Common myeloid progenitor, CD34-positive (primary cell): ENCODE measurements at regions of chr14 and their contacts with region 1.

Region 1: GRCh38 chr14:20970983-20971704 is 15.9 kb downstream of the RNASE2 start:
- DNase-seq: peak; percentile 81 to 88 (median 88)
- H3K4me3 ChIP-seq: peak overlapping the region; percentile 47 to 92 (median 79)
- H3K27ac ChIP-seq: no peak overlapping the region
- H3K4me1 ChIP-seq: peaks cover 0 to 14% (median 11%) of the 10 kb centered on the region in 4 experiments
- H3K27me3 ChIP-seq: peaks cover 0 to 2% (median 0%) of the 10 kb centered on the region in 5 experiments

Region 2: GRCh38 chr14:20356422-20356821 is 614.7 kb before region 1 on chr14:
- CTCF ChIA-PET with region 1: no interaction called
- POLR2A ChIA-PET with region 1: no interaction called
- DNase-seq: no peak
- H3K4me3 ChIP-seq: no peak overlapping the region
- H3K27ac ChIP-seq: peak overlapping the region in 1 of 2 experiments; percentile 2
- H3K4me1 ChIP-seq: peaks cover 0 to 9% (median 3%) of the 10 kb centered on the region in 4 experiments
- H3K27me3 ChIP-seq: no peaks in the 10 kb centered on the region

Region 3: DNA sequence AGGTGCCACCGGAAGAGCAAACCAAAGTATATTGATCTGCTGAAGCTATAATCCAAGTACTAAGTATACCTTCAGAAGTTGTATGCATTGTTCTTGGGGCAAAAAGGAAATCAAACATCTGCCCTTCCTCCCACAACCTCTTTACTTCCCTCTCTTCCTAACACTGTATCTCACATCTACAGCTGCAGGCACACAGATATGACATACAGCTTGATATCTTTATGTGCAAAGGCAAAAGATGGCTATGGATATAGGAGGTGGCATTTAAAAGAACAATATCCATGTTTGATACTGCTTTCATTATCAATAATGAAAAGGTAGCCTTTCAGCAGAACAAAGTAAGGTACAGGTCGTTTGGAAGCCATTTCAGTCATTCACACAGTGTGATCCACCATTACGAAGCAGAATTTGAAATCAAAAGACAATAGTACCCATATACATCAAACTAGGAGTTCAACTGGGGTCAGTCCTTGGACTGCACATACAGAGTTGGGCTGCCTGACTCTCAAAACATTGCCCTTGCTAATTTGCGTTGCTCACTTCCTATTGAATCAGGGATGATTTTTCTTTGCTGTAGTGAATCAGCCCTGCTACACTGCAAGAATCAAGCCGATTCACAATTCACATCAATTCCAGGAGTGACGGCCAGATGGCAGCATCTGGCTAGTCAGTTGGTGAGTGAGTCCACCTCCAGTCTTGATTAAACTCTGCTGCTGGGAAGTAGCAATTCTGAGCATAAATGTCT is 273.7 kb before region 1 on chr14:
- CTCF ChIA-PET with region 1: interaction called, 11 read pairs
- POLR2A ChIA-PET with region 1: no interaction called
- DNase-seq: peak; percentile 75 to 87 (median 81)
- H3K4me3 ChIP-seq: peak overlapping the region in 1 of 7 experiments; percentile 27
- H3K27ac ChIP-seq: no peak overlapping the region
- H3K4me1 ChIP-seq: peaks cover 0 to 7% (median 5%) of the 10 kb centered on the region in 4 experiments
- H3K27me3 ChIP-seq: no peaks in the 10 kb centered on the region

Region 4: DNA sequence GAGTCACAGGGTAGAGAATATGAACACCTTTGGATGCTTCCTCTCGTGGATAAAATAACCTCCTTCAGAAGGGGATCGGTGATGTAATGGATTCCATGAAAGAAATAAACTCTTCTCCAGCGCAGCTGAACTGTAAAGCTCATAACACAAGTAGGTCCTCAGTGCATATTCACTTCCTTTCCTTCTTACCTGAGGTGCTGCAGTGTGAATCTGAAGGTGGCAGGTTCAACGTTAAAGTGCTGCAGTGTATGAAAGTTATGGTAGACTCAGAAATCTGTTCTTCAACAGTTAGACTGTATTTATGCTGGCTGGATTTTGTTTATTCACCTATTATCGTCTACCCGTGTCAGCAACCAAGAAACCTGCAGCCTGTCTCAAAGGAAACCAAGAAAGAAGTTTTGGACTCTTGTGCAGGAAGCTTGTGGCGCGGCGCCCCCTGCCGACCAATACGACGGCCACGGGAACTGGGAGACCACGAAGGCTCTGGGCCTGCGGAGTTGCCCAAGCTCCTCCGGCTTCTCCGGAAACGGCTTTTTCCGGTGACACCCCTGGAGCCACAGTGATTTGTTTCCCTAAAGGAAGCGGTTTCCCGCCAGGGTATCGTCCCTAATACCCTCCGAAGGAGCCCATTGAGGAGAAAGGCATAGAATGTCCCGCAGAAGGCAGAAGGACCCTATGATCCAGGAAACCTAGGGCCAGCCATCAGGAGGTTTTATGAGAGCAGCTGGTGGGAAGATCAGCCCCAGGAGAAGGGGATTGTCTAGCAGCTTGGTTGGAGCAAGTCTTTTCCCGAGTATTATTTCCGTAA is 97.6 kb before region 1 on chr14:
- CTCF ChIA-PET with region 1: interaction called, 15 read pairs
- POLR2A ChIA-PET with region 1: interaction called, 3 read pairs
- DNase-seq: peak; percentile 77 to 86 (median 83)
- H3K4me3 ChIP-seq: peak overlapping the region in 1 of 7 experiments; percentile 45
- H3K27ac ChIP-seq: no peak overlapping the region
- H3K4me1 ChIP-seq: peaks cover 5 to 12% (median 9%) of the 10 kb centered on the region in 4 experiments
- H3K27me3 ChIP-seq: no peaks in the 10 kb centered on the region

Region 5: DNA sequence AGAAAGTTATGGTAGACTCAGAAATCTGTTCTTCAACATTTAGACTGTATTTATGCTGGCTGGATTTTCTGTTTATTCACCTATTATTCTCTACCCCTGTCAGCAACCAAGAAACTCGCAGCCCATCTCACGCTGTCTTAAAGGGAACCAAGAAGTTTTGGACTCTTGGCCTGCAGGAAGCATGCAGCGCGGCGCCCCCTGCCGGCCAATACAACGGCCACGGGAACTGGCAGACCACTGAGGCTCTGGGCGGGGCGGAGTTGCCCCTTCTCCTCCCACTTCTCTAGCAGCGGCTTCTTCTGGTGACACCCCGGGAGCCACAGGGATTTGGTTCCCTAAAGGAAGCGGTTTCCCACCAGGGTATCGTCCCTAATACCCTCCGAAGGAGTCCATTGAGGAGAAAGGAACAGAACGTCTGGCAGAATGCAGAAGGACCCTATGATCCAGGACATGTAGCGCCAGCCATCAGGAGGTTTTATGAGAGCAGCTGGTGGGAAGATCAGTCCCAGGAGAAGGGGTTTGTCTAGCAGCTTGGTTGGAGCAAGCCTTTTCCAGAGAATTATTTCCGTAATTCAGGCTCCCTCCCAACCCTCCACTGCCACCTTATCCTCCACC is 36.9 kb before region 1 on chr14:
- CTCF ChIA-PET with region 1: no interaction called
- POLR2A ChIA-PET with region 1: no interaction called
- DNase-seq: peak in 2 of 3 donors; percentile 15 to 31
- H3K4me3 ChIP-seq: no peak overlapping the region
- H3K27ac ChIP-seq: no peak overlapping the region
- H3K4me1 ChIP-seq: no peaks in the 10 kb centered on the region
- H3K27me3 ChIP-seq: no peaks in the 10 kb centered on the region

Region 6: DNA sequence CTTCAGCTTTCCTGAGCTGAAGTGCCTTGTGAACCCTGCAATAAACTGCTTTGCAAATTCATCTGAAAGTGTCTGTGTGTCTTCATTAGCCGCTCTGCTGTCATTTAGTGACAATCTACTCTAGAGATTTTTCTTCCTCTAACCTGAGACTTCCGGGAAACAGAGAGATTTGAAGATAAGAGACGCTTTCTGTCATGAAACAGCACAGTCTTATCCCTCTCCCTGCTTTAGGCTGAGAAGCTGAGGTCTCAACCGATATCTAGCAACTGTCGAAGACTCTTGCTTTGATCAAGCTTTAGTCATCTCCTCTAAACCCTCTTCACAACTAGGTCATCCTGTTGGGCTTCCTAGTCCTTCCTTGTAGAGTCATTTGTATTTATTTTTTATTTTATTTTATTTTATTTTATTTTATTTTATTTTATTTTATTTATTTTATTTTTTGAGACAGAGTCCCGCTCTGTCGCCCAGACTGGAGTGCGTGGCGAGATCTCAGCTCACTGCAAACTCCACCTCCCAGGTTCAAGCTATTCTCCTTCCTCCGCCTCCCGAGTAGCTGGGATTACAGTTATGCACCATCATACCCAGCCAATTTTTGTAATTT is 14.7 kb before region 1 on chr14:
- CTCF ChIA-PET with region 1: interaction called, 38 read pairs
- POLR2A ChIA-PET with region 1: no interaction called
- DNase-seq: no peak
- H3K4me3 ChIP-seq: no peak overlapping the region
- H3K27ac ChIP-seq: no peak overlapping the region
- H3K4me1 ChIP-seq: peaks cover 0 to 42% (median 7%) of the 10 kb centered on the region in 4 experiments
- H3K27me3 ChIP-seq: no peaks in the 10 kb centered on the region

Region 7: GRCh38 chr14:20982646-20983369 is 11.7 kb after region 1 on chr14:
- CTCF ChIA-PET with region 1: interaction called, 32 read pairs
- POLR2A ChIA-PET with region 1: no interaction called
- DNase-seq: no peak
- H3K4me3 ChIP-seq: no peak overlapping the region
- H3K27ac ChIP-seq: no peak overlapping the region
- H3K4me1 ChIP-seq: peaks cover 0 to 2% (median 0%) of the 10 kb centered on the region in 4 experiments
- H3K27me3 ChIP-seq: no peaks in the 10 kb centered on the region